CD8-positive, alpha-beta T cell (primary cell): ENCODE measurements at regions of chr17 and their contacts with region 1.

Region 1: DNA sequence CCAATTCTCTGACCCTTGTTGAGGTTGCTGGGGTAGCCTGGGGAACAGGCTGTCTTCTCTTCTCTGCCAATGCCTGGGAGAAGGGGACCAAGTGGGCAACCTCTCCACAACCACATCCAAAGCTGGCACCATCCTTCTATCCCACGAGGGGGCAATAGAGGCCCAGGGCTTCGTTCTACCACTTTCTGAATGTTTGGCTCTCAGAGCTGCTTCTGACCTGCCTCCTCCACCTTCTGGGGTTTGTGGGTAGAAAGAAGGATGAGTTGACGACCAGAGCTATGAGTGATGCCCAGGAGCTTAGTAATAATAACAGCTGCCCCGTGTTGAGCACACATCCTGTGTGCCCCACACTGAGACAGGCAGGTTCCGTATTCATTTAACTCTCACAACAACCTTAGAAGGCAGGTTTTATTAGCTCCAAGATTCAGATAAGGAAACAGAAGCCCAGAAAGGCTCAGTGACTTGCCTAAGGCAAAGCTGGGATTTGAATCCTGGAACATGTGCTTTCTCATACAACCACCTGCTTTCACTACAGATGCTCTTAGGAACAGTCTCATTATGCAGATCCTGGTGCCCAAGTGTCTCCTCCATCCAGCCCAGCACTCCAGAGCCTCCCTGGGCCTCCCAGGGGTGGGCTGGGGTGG is 11.1 kb downstream of the TSPOAP1 start:
- DNase-seq: peak; percentile 57 to 92 (median 76)
- ATAC-seq: peak; percentile 97
- H3K4me3 ChIP-seq: no peak overlapping the region
- H3K4me3 Mint-ChIP-seq: peak overlapping the region; percentile 21
- H3K27ac ChIP-seq: peak overlapping the region; percentile 36 to 64
- H3K27ac Mint-ChIP-seq: peak overlapping the region; percentile 91
- H3K4me1 ChIP-seq: peaks cover 11% of the 10 kb centered on the region
- H3K4me1 Mint-ChIP-seq: peaks cover 13% of the 10 kb centered on the region
- H3K27me3 ChIP-seq: no peaks in the 10 kb centered on the region
- H3K27me3 Mint-ChIP-seq: no peaks in the 10 kb centered on the region
- CTCF ChIP-seq: peak; percentile 78

Region 2: GRCh38 chr17:58066401-58066800 is 251.1 kb before region 1 on chr17:
- CTCF ChIA-PET with region 1: no interaction called
- POLR2A ChIA-PET with region 1: no interaction called
- intact Hi-C with region 1: no loop called
- DNase-seq: no peak
- ATAC-seq: no peak
- H3K4me3 ChIP-seq: no peak overlapping the region
- H3K4me3 Mint-ChIP-seq: no peak overlapping the region
- H3K27ac ChIP-seq: no peak overlapping the region
- H3K27ac Mint-ChIP-seq: no peak overlapping the region
- H3K4me1 ChIP-seq: no peaks in the 10 kb centered on the region
- H3K4me1 Mint-ChIP-seq: no peaks in the 10 kb centered on the region
- H3K27me3 ChIP-seq: no peaks in the 10 kb centered on the region
- H3K27me3 Mint-ChIP-seq: peaks cover 18% of the 10 kb centered on the region
- CTCF ChIP-seq: no peak

Region 3: GRCh38 chr17:58249270-58250133 is 68.0 kb before region 1 on chr17:
- CTCF ChIA-PET with region 1: interaction called, 10 read pairs
- POLR2A ChIA-PET with region 1: no interaction called
- intact Hi-C with region 1: no loop called
- DNase-seq: peak; percentile 51 to 88 (median 74)
- ATAC-seq: peak; percentile 98
- H3K4me3 ChIP-seq: peak overlapping the region; percentile 53 to 59
- H3K4me3 Mint-ChIP-seq: peak overlapping the region; percentile 84
- H3K27ac ChIP-seq: no peak overlapping the region
- H3K27ac Mint-ChIP-seq: no peak overlapping the region
- H3K4me1 ChIP-seq: peaks cover 17% of the 10 kb centered on the region
- H3K4me1 Mint-ChIP-seq: peaks cover 17% of the 10 kb centered on the region
- H3K27me3 ChIP-seq: peaks cover 0 to 5% of the 10 kb centered on the region in 2 experiments
- H3K27me3 Mint-ChIP-seq: peaks cover 8% of the 10 kb centered on the region
- CTCF ChIP-seq: peak; percentile 98

Region 4: DNA sequence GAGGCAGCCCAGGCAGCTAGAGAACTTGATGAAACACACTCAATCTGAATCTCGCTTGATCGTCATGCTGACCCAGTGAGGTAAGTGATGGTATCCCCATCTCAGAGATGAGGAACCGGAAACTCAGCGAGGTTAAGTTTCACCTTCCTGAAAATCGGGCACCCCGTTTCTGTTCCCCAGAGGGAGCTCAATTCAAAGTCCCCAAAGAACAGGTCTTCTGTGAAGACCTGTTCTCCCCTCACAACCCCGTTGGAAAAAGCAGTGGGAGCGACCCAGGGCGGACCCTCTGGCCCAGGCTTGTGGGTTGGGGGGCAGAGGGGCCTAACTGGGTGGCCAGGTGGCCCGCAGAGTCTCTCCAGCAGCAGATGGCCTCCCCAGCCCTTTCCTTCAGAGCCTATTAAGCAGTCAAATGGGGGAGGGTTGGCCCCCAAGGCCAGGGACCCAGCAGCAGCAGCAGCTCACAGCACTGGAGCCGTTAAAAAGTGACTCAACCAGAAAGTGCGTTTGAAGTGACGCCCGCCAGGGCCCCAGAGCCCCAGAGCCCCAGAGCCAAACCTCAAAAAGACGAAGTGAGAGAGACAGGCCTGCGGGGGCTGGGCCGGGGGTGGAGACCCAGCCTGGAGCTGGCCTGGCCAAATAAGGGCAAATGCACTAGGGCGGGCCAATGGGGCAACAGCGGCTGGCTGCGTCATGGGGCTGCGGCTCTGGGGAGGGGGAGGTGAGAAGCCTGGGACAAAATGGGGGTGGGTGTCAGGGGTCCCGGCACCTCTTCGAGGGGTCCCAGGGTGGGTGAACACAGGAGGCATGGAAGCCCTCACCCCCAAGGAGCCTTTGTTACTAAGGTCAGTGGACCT is 20.3 kb after region 1 on chr17:
- CTCF ChIA-PET with region 1: interaction called, 587 read pairs
- POLR2A ChIA-PET with region 1: interaction called, 773 read pairs
- intact Hi-C with region 1: no loop called
- DNase-seq: peak; percentile 81 to 96 (median 92)
- ATAC-seq: peak; percentile 72
- H3K4me3 ChIP-seq: peak overlapping the region; percentile 90 to 99
- H3K4me3 Mint-ChIP-seq: peak overlapping the region; percentile 92
- H3K27ac ChIP-seq: peak overlapping the region; percentile 92 to 99
- H3K27ac Mint-ChIP-seq: peak overlapping the region; percentile 97
- H3K4me1 ChIP-seq: peaks cover 72% of the 10 kb centered on the region
- H3K4me1 Mint-ChIP-seq: peaks cover 83% of the 10 kb centered on the region
- H3K27me3 ChIP-seq: no peaks in the 10 kb centered on the region
- H3K27me3 Mint-ChIP-seq: no peaks in the 10 kb centered on the region
- CTCF ChIP-seq: no peak

Region 5: GRCh38 chr17:58364270-58364942 is 46.9 kb after region 1 on chr17:
- CTCF ChIA-PET with region 1: interaction called, 25 read pairs
- POLR2A ChIA-PET with region 1: interaction called, 5 read pairs
- intact Hi-C with region 1: no loop called
- DNase-seq: no peak
- ATAC-seq: no peak
- H3K4me3 ChIP-seq: no peak overlapping the region
- H3K4me3 Mint-ChIP-seq: no peak overlapping the region
- H3K27ac ChIP-seq: no peak overlapping the region
- H3K27ac Mint-ChIP-seq: no peak overlapping the region
- H3K4me1 ChIP-seq: peaks cover 3% of the 10 kb centered on the region
- H3K4me1 Mint-ChIP-seq: peaks cover 13% of the 10 kb centered on the region
- H3K27me3 ChIP-seq: no peaks in the 10 kb centered on the region
- H3K27me3 Mint-ChIP-seq: no peaks in the 10 kb centered on the region
- CTCF ChIP-seq: no peak

Region 6: DNA sequence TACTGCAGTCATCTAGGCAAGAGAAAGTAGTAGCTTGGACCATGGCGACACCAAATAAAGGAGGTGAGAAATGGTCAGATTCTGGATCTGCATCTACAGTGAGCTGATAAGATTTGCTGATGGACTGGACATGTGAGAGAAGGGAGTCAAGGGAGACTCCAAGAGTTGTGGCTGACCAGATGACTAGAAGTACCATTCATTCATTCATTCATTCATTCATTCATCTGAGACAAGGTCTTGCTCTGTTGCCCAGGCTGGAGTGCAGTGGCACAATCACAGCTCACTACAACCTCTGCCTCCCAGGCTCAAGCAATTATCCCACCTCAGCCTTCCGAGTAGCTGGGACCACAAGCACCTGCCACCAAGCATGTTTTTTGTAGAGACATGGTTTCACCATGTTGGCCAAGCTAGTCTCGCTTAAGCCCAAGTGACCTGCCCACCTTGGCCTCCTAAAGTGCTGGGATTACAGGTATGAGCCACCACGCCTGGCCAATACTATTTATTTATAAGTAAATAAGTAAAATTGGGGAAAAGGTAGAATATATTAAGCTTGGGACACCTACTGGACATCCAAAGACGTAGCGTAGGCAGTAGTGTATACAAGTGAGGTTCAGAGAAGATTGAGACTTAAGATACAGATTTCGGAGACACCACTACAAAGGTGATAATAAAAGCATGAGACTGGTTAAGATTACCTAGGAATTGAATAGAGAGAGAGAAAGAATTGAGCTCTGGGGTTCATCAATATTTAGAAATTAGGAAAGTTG is 115.4 kb after region 1 on chr17:
- CTCF ChIA-PET with region 1: interaction called, 10 read pairs
- POLR2A ChIA-PET with region 1: no interaction called
- intact Hi-C with region 1: no loop called
- DNase-seq: no peak
- ATAC-seq: no peak
- H3K4me3 ChIP-seq: no peak overlapping the region
- H3K4me3 Mint-ChIP-seq: no peak overlapping the region
- H3K27ac ChIP-seq: no peak overlapping the region
- H3K27ac Mint-ChIP-seq: no peak overlapping the region
- H3K4me1 ChIP-seq: no peaks in the 10 kb centered on the region
- H3K4me1 Mint-ChIP-seq: no peaks in the 10 kb centered on the region
- H3K27me3 ChIP-seq: no peaks in the 10 kb centered on the region
- H3K27me3 Mint-ChIP-seq: no peaks in the 10 kb centered on the region
- CTCF ChIP-seq: no peak

Region 7: GRCh38 chr17:58991718-58992331 is 674.3 kb after region 1 on chr17:
- CTCF ChIA-PET with region 1: no interaction called
- POLR2A ChIA-PET with region 1: no interaction called
- intact Hi-C with region 1: no loop called
- DNase-seq: no peak
- ATAC-seq: no peak
- H3K4me3 ChIP-seq: no peak overlapping the region
- H3K4me3 Mint-ChIP-seq: no peak overlapping the region
- H3K27ac ChIP-seq: no peak overlapping the region
- H3K27ac Mint-ChIP-seq: no peak overlapping the region
- H3K4me1 ChIP-seq: no peaks in the 10 kb centered on the region
- H3K4me1 Mint-ChIP-seq: no peaks in the 10 kb centered on the region
- H3K27me3 ChIP-seq: no peaks in the 10 kb centered on the region
- H3K27me3 Mint-ChIP-seq: no peaks in the 10 kb centered on the region
- CTCF ChIP-seq: no peak

Region 8: GRCh38 chr17:59004338-59005111 is 687.0 kb after region 1 on chr17:
- CTCF ChIA-PET with region 1: interaction called, 3 read pairs
- POLR2A ChIA-PET with region 1: no interaction called
- intact Hi-C with region 1: loop called (anchors 1 to 5 kb)
- DNase-seq: peak; percentile 52 to 82 (median 74)
- ATAC-seq: peak; percentile 54
- H3K4me3 ChIP-seq: no peak overlapping the region
- H3K4me3 Mint-ChIP-seq: no peak overlapping the region
- H3K27ac ChIP-seq: peak overlapping the region in 1 of 2 experiments; percentile 40
- H3K27ac Mint-ChIP-seq: peak overlapping the region; percentile 60
- H3K4me1 ChIP-seq: peaks cover 15% of the 10 kb centered on the region
- H3K4me1 Mint-ChIP-seq: peaks cover 13% of the 10 kb centered on the region
- H3K27me3 ChIP-seq: no peaks in the 10 kb centered on the region
- H3K27me3 Mint-ChIP-seq: no peaks in the 10 kb centered on the region
- CTCF ChIP-seq: peak; percentile 98